ENCODE measurements at regions of chr17 and their contacts with region 1.

Region 1: DNA sequence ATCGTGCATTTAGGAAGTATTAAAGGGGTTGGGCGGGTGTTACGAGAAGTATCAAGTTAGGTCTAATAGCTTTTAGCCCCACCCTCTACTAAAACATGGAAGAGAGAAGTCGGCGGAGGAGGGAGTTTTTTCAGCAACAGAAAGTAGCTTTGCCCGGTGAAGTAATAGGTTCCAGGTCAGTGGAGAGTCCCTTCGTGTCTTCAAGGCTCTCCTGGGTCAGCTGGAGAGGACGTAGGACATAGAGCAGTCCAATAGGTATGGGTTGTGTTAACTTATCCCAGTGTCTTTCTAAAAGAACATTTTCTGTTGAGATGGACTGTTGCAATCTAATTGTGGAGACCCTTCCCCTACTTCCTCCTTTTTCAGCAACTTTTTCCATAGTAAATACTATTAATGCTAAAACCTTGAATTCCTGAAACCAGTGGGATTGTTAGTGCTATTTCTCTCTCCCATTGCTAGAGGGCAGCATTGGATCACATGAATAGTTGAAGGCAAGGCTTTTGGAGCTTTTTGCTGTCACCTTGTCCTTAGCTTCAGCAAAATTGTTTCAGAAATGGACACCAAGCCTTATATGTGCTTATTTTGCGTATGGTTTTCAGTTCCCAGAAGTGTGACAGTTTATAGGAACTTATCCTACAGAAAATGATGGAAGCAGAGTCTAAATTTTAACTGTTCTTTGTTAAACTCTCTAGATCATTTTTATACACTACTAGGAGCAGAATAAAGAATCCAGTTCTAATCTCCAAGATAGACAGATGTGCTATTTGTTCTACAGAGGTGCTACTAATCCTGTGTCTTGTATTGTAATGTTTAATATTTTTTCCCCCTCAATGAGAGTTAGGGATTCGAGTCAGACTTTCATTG is 38.4 kb downstream of the UTP18 start:
- DNase-seq: no peak
- ATAC-seq: peak; percentile 80
- H3K4me3 Mint-ChIP-seq: no peak overlapping the region
- H3K27ac Mint-ChIP-seq: peak overlapping the region; percentile 51
- H3K4me1 Mint-ChIP-seq: peaks cover 35% of the 10 kb centered on the region
- H3K27me3 Mint-ChIP-seq: no peaks in the 10 kb centered on the region
- CTCF ChIP-seq: peak; percentile 32; the same call in 1 of the 2 replicates

Region 2: DNA sequence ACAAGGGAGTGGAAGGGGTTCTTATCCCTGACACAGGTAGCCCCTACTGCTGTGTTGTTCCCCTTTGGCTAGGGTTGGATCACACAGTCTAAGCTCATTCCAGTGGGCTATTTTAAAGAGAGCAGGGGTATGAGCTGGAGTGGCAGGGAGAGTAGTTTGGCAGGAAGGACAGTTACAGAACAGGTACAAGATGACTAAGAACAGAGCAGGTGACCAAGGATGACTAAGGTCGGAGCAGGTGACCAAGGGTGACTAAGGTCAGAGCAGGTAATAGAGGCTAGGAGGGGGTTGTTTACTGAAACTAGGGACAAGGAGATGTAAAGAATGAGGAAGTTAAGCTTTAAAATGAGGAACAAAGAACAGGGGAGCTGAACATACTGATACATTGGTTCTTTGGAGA is 20.4 kb after region 1 on chr17:
- CTCF ChIA-PET with region 1: interaction called, 11 read pairs
- POLR2A ChIA-PET with region 1: no interaction called
- DNase-seq: no peak
- ATAC-seq: no peak
- H3K4me3 Mint-ChIP-seq: no peak overlapping the region
- H3K27ac Mint-ChIP-seq: no peak overlapping the region
- H3K4me1 Mint-ChIP-seq: peaks cover 2% of the 10 kb centered on the region; the same call in 1 of the 2 replicates
- H3K27me3 Mint-ChIP-seq: peaks cover 8% of the 10 kb centered on the region; the same call in 1 of the 2 replicates
- CTCF ChIP-seq: no peak

Region 3: GRCh38 chr17:51355441-51356410 is 57.0 kb after region 1 on chr17:
- CTCF ChIA-PET with region 1: interaction called, 11 read pairs
- POLR2A ChIA-PET with region 1: no interaction called
- DNase-seq: no peak
- ATAC-seq: peak; percentile 75
- H3K4me3 Mint-ChIP-seq: no peak overlapping the region
- H3K27ac Mint-ChIP-seq: no peak overlapping the region
- H3K4me1 Mint-ChIP-seq: no peaks in the 10 kb centered on the region
- H3K27me3 Mint-ChIP-seq: no peaks in the 10 kb centered on the region; the same call in 1 of the 2 replicates
- CTCF ChIP-seq: no peak

Region 4: GRCh38 chr17:51371732-51372151 is 73.0 kb after region 1 on chr17:
- CTCF ChIA-PET with region 1: interaction called, 10 read pairs
- POLR2A ChIA-PET with region 1: no interaction called
- DNase-seq: peak; percentile 64
- ATAC-seq: peak; percentile 88
- H3K4me3 Mint-ChIP-seq: peak overlapping the region; percentile 54
- H3K27ac Mint-ChIP-seq: peak overlapping the region; percentile 30; the same call in 1 of the 2 replicates
- H3K4me1 Mint-ChIP-seq: peaks cover 37% of the 10 kb centered on the region
- H3K27me3 Mint-ChIP-seq: no peaks in the 10 kb centered on the region; the same call in 1 of the 2 replicates
- CTCF ChIP-seq: peak; percentile 53

Region 5: GRCh38 chr17:51397361-51398127 is 98.8 kb after region 1 on chr17:
- CTCF ChIA-PET with region 1: no interaction called
- POLR2A ChIA-PET with region 1: no interaction called
- DNase-seq: no peak
- ATAC-seq: no peak
- H3K4me3 Mint-ChIP-seq: no peak overlapping the region
- H3K27ac Mint-ChIP-seq: no peak overlapping the region
- H3K4me1 Mint-ChIP-seq: no peaks in the 10 kb centered on the region
- H3K27me3 Mint-ChIP-seq: 0 out of 2 replicates have a peak, but pooled peaks cover 2% of the 10 kb centered on the region
- CTCF ChIP-seq: no peak

Region 6: DNA sequence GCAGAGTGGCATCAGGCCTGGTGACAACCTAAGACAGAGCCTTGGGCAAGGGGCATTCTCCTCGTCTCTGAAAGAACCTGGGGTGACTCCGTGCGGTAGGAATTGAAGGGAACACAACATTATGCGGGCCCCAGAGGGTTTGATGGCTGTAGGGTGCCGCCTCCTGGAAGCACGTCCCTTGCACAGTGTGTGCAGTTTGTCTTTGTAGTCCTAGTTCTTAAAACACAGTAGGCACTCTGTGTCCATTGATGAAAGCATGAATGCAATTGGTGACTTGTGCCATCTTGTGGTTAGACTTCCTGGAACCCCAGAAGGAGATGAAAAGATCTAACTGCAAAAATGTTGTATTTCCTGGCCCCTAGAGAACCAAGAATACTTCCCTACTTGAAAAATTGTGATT is 241.4 kb after region 1 on chr17:
- CTCF ChIA-PET with region 1: interaction called, 10 read pairs
- POLR2A ChIA-PET with region 1: no interaction called
- DNase-seq: no peak
- ATAC-seq: no peak
- H3K4me3 Mint-ChIP-seq: no peak overlapping the region
- H3K27ac Mint-ChIP-seq: no peak overlapping the region
- H3K4me1 Mint-ChIP-seq: peaks cover 4% of the 10 kb centered on the region; the same call in 1 of the 2 replicates
- H3K27me3 Mint-ChIP-seq: no peaks in the 10 kb centered on the region
- CTCF ChIP-seq: no peak

Measured in WTC11 (cell line).